ENCODE measurements at regions of chr17 and their contacts with region 1.

Region 1: DNA sequence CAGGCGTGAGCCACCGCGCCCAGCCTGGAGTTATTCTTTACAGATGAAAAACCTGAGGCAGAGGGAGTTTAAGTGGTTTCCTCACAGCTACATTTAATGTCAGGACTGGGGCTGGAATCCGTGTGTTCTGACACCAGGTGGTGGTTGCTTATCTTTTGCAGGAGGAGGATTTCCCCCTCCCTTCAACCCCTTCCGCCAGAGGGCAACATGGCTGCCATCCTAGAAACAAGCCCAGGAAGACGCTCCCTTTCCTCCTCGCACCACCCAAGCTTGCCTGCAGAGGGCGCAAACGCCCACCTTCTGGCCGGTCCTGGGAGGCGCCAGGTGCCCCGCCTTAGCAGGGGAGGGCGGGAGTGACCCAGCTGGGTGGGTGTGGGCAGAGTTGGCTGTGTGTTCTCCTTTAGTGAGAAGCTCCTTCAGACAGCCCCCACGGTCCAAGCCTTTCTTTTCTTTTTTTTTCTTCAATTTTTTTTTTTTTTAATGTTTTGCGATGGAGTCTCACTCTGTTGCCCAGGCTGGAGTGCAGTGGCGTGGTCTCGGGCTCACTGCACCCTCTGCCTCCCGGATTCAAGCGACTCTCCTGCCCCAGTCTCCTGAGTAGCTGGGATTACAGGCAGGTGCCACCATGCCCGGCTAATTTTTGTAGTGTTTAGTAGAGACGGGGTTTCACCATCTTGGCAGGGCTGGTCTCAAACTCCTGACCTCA is 9.9 kb upstream of the RAP1GAP2 start:
- DNase-seq: peak; percentile 93
- ATAC-seq: peak; percentile 98
- H3K4me3 Mint-ChIP-seq: no peak overlapping the region
- H3K27ac Mint-ChIP-seq: peak overlapping the region; percentile 46
- H3K4me1 Mint-ChIP-seq: peaks cover 15% of the 10 kb centered on the region
- H3K27me3 Mint-ChIP-seq: peaks cover 33% of the 10 kb centered on the region

Region 2: GRCh38 chr17:2808367-2809335 is 22.3 kb after region 1 on chr17:
- CTCF ChIA-PET with region 1: interaction called, 120 read pairs
- DNase-seq: no peak
- ATAC-seq: no peak
- H3K4me3 Mint-ChIP-seq: no peak overlapping the region
- H3K27ac Mint-ChIP-seq: no peak overlapping the region
- H3K4me1 Mint-ChIP-seq: peaks cover 26% of the 10 kb centered on the region
- H3K27me3 Mint-ChIP-seq: peaks cover 40% of the 10 kb centered on the region

Region 3: DNA sequence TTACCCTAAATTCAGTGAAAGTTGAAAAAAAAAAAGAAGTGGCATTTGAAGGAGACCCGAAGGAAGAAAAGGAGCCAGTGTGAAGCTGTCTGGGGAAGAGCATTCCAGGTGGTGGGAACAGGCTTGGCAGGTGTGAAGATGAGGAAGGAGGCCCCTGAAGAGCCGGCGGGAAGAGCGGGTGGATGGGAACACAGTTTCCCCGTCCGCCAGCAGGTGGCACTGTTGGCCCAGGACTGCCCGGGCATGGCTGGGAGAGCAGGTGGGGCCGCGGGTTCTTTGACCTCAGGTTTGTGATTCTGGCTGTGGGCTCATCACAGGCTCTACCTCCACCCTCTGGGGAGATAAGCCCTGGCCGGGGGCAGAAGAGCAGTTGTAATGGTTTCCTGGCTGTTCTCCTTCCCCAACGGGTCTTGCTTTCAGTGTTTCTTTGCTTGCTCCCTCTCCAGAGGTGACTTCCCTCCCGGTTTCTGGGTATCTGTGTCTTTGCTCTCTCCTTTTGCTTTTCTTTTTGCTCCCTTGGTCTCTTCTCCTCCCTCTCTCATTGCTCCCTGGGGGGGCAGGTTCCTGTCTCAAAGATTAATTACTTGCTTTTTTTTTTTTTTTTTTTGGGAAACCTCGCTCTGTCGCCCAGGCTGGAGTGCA is 42.2 kb after region 1 on chr17:
- CTCF ChIA-PET with region 1: interaction called, 27 read pairs
- DNase-seq: peak; percentile 82
- ATAC-seq: peak; percentile 92
- H3K4me3 Mint-ChIP-seq: no peak overlapping the region
- H3K27ac Mint-ChIP-seq: no peak overlapping the region
- H3K4me1 Mint-ChIP-seq: peaks cover 14% of the 10 kb centered on the region
- H3K27me3 Mint-ChIP-seq: peaks cover 19% of the 10 kb centered on the region

Region 4: DNA sequence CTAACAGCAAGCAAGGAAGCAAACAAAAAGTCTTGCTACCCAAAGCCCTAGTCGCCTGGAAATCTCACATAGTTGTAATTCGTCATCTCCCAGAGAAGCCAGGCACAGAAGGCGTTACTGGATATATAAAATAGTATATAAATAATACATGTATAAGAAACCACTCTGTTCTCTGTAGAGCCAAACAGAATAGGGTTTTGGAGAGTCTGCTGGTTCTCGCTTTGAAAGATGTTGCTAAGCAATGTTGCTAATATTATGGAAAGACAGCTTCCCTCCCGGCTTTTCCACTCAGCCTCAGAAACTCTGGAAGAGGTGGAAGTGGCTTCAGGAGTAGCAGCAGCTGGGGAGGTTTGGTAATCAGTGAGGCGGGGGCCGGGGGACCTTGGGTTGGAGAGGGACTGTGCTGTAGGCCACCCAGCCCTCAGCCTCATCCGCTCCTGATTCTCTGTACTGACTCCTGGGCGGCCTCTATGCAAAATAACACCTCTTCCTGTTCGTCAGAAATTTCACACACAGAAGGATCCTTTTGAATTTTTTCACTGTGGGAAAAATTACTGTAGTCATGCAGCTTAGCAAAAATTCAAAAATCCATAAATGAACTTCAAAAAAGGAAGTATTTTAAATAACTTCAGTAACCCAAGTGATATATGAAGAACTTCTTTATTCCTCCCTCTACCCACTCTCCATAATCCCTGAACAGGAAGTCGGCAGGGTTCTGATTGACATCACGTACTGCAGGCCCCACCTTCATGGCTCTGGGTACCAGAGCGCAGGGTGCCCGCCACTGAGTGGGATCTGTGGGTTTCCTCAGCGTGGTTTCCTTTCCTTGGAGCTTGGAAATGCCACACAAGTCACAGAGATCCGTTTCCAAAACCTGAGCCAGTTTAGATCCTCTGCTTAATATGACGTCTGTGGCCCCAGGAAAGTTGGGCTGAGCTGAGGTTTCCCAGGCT is 61.3 kb after region 1 on chr17:
- CTCF ChIA-PET with region 1: interaction called, 15 read pairs
- DNase-seq: no peak
- ATAC-seq: no peak
- H3K4me3 Mint-ChIP-seq: no peak overlapping the region
- H3K27ac Mint-ChIP-seq: no peak overlapping the region
- H3K4me1 Mint-ChIP-seq: peaks cover 11% of the 10 kb centered on the region
- H3K27me3 Mint-ChIP-seq: peaks cover 28% of the 10 kb centered on the region

Region 5: GRCh38 chr17:2883567-2884101 is 97.3 kb after region 1 on chr17:
- CTCF ChIA-PET with region 1: no interaction called
- DNase-seq: no peak
- ATAC-seq: no peak
- H3K4me3 Mint-ChIP-seq: no peak overlapping the region
- H3K27ac Mint-ChIP-seq: no peak overlapping the region
- H3K4me1 Mint-ChIP-seq: no peaks in the 10 kb centered on the region
- H3K27me3 Mint-ChIP-seq: no peaks in the 10 kb centered on the region

Measured in activated CD8-positive, alpha-beta memory T cell treated with anti-CD3 and anti-CD28 coated beads, Interleukin-2, amount 10 ng/mL, durations not matched to agents 7 days and 5 days (primary cell).